CD4-positive, alpha-beta memory T cell (primary cell): ENCODE measurements at regions of chr2 and their contacts with region 1.

Region 1: DNA sequence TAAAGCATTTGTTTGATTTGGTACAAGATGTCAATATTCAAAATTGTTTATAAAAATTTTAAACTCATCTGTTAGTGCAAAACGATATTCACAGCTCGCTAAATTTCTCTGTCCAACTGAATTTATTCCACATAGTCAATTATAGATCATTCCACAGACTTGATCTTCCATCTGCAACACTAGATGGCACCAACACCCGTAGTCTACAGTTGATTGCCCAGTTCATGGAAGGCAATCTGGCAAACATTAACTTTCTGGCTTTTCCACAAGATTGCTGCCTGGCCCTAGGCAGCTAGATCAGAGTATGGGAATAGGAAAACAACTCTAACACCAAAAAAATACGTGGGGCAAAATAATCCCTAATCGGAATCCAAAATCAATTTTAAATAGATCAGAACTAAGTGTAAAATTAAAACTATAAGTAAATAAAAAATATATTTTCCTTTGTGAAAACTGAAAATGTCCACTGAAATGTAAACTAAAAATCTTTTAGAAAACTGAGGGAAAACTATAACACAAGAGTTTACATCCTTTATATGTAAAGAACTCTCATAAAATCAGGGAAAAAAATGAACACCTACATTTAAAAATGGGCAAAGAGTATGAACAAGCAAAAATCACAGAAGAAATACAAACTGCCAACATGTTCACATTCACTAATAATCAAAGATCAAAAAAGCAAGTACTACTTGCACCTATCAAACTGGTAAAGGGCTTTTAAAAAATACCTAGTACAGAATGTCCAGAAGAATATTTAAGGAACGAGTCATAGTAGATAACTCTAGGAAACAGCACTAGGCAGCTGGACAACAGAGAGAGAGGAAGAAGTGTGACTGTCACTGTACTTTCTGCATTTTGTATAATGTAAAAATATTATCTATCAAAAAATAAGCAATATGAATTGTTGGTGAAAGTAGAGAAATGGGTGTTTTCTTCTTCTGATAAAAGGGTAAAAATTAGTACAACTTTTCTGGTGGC is 35.0 kb downstream of the RTN4 start:
- DNase-seq: peak; percentile 37 to 51 (median 44)
- H3K4me3 ChIP-seq: no peak overlapping the region
- H3K4me3 Mint-ChIP-seq: no peak overlapping the region
- H3K27ac ChIP-seq: no peak overlapping the region
- H3K27ac Mint-ChIP-seq: peak overlapping the region in 4 of 7 donors; percentile 45 to 81 (median 70)
- H3K4me1 ChIP-seq: peaks cover 34% of the 10 kb centered on the region
- H3K4me1 Mint-ChIP-seq: peaks cover 27 to 64% (median 48%) of the 10 kb centered on the region in 4 donors
- H3K27me3 ChIP-seq: no peaks in the 10 kb centered on the region
- H3K27me3 Mint-ChIP-seq: no peaks in the 10 kb centered on the region

Region 2: GRCh38 chr2:54899576-54900200 is 115.6 kb before region 1 on chr2:
- CTCF ChIA-PET with region 1: interaction called, 26 read pairs
- POLR2A ChIA-PET with region 1: interaction called, 8 read pairs
- intact Hi-C with region 1: loop called (anchors 5 kb)
- DNase-seq: peak in 4 of 5 donors; percentile 11 to 25 (median 16)
- H3K4me3 ChIP-seq: no peak overlapping the region
- H3K4me3 Mint-ChIP-seq: no peak overlapping the region
- H3K27ac ChIP-seq: no peak overlapping the region
- H3K27ac Mint-ChIP-seq: no peak overlapping the region
- H3K4me1 ChIP-seq: peaks cover 27% of the 10 kb centered on the region
- H3K4me1 Mint-ChIP-seq: peaks cover 20 to 26% (median 23%) of the 10 kb centered on the region in 4 donors
- H3K27me3 ChIP-seq: no peaks in the 10 kb centered on the region
- H3K27me3 Mint-ChIP-seq: no peaks in the 10 kb centered on the region

Region 3: GRCh38 chr2:55026202-55026601 is 11.0 kb after region 1 on chr2:
- CTCF ChIA-PET with region 1: interaction called, 17 read pairs
- POLR2A ChIA-PET with region 1: no interaction called
- intact Hi-C with region 1: no loop called
- DNase-seq: no peak
- H3K4me3 ChIP-seq: no peak overlapping the region
- H3K4me3 Mint-ChIP-seq: peak overlapping the region in 1 of 8 donors; percentile 17
- H3K27ac ChIP-seq: no peak overlapping the region
- H3K27ac Mint-ChIP-seq: peak overlapping the region in 2 of 7 donors; percentile 2 to 30
- H3K4me1 ChIP-seq: peaks cover 78% of the 10 kb centered on the region
- H3K4me1 Mint-ChIP-seq: peaks cover 7 to 24% (median 18%) of the 10 kb centered on the region in 4 donors
- H3K27me3 ChIP-seq: no peaks in the 10 kb centered on the region
- H3K27me3 Mint-ChIP-seq: no peaks in the 10 kb centered on the region

Region 4: DNA sequence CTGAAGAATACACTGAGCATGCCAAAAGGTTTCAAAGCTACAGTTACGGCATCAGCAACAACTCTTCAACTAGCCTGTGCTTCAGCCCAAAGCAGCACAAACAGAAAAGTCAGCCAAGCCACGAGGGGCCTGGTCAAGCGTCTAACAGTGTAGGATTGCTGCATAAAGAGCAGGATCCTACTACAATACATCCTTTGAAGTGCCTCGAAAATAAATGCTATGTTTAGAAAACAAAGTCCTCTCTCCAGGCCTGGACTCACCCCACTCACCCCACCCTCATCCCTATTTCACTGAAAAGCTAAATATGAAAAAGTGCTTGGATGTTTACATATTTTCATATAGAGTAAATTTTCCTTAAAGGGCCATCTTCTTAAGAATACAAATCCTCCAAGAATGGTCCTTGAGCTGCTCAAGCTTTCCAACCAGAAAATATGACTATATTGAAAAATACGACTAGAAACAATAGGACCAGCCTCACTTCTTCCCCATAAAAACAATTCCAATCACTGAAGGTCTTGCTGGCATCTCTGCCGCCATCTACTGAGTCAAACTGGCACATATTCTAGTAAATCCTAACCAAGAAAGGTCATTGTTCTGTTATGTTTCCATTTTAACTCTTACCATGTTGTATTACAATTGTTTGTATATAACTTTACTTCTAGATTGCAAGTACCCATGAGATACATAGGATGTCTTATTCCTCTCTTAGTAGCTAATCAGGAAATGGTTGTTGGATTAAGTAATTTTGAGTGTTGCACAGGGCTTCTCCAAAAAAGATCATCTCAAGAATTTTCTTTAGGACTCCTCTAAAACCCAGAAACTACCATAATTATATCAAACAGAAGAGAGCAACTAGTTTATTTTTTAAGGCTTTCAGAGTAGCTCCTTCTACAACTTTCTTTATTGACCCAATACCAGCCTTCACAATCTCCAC is 153.2 kb after region 1 on chr2:
- CTCF ChIA-PET with region 1: interaction called, 177 read pairs
- POLR2A ChIA-PET with region 1: interaction called, 4 read pairs
- intact Hi-C with region 1: loop called (anchors 1 kb)
- DNase-seq: peak; percentile 37 to 50 (median 41)
- H3K4me3 ChIP-seq: no peak overlapping the region
- H3K4me3 Mint-ChIP-seq: no peak overlapping the region
- H3K27ac ChIP-seq: no peak overlapping the region
- H3K27ac Mint-ChIP-seq: peak overlapping the region in 1 of 7 donors; percentile 0
- H3K4me1 ChIP-seq: no peaks in the 10 kb centered on the region
- H3K4me1 Mint-ChIP-seq: peaks cover 0 to 3% (median 1%) of the 10 kb centered on the region in 4 donors
- H3K27me3 ChIP-seq: no peaks in the 10 kb centered on the region
- H3K27me3 Mint-ChIP-seq: no peaks in the 10 kb centered on the region

Region 5: GRCh38 chr2:55175254-55176025 is 160.2 kb after region 1 on chr2:
- CTCF ChIA-PET with region 1: interaction called, 177 read pairs
- POLR2A ChIA-PET with region 1: interaction called, 3 read pairs
- intact Hi-C with region 1: loop called (anchors 1 kb)
- DNase-seq: peak in 4 of 5 donors; percentile 46 to 64 (median 52)
- H3K4me3 ChIP-seq: no peak overlapping the region
- H3K4me3 Mint-ChIP-seq: peak overlapping the region in 2 of 8 donors; percentile 1 to 27
- H3K27ac ChIP-seq: no peak overlapping the region
- H3K27ac Mint-ChIP-seq: peak overlapping the region in 1 of 7 donors; percentile 44
- H3K4me1 ChIP-seq: no peaks in the 10 kb centered on the region
- H3K4me1 Mint-ChIP-seq: peaks cover 0 to 6% (median 3%) of the 10 kb centered on the region in 4 donors
- H3K27me3 ChIP-seq: no peaks in the 10 kb centered on the region
- H3K27me3 Mint-ChIP-seq: no peaks in the 10 kb centered on the region

Region 6: GRCh38 chr2:55223958-55224760 is 208.9 kb after region 1 on chr2:
- CTCF ChIA-PET with region 1: interaction called, 3 read pairs
- POLR2A ChIA-PET with region 1: interaction called, 7 read pairs
- intact Hi-C with region 1: loop called (anchors 5 kb)
- DNase-seq: peak in 2 of 5 donors; percentile 21 to 39
- H3K4me3 ChIP-seq: no peak overlapping the region
- H3K4me3 Mint-ChIP-seq: peak overlapping the region; percentile 79 to 90 (median 86)
- H3K27ac ChIP-seq: peak overlapping the region; percentile 84
- H3K27ac Mint-ChIP-seq: peak overlapping the region; percentile 85 to 95 (median 93)
- H3K4me1 ChIP-seq: peaks cover 40% of the 10 kb centered on the region
- H3K4me1 Mint-ChIP-seq: peaks cover 32 to 55% (median 41%) of the 10 kb centered on the region in 4 donors
- H3K27me3 ChIP-seq: no peaks in the 10 kb centered on the region
- H3K27me3 Mint-ChIP-seq: no peaks in the 10 kb centered on the region

Region 7: DNA sequence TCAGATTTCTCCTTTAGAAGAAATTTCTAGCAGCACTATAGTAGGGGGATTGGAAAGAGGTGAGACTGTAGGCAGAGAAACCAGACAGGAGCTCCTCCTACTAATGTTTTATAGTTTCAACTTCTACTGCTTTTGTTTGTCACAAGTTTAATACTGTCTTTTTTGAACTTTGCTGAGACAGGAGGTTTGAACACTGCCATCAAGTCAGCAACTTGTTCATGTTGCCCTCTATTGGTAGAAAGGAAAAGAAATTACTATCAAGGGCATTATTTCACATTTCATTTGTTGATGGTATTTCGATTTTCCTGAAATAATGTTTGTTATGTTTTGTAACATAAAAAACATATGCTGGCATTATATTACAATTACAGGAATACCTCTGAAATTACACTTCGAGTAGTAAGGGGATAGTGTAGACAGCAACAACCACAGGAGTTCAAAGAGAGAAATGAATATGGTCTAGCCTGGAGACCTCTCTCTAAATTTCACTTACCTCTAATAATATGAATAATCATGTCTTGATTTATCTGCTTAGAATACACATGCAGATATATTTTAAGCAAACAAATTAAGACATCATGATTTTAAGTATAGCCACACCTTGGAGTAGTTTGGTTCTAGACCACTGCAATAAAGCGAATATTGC is 416.9 kb after region 1 on chr2:
- CTCF ChIA-PET with region 1: no interaction called
- POLR2A ChIA-PET with region 1: no interaction called
- intact Hi-C with region 1: loop called (anchors 2 kb)
- DNase-seq: peak in 4 of 5 donors; percentile 27 to 45 (median 35)
- H3K4me3 ChIP-seq: no peak overlapping the region
- H3K4me3 Mint-ChIP-seq: no peak overlapping the region
- H3K27ac ChIP-seq: no peak overlapping the region
- H3K27ac Mint-ChIP-seq: peak overlapping the region in 1 of 7 donors; percentile 48
- H3K4me1 ChIP-seq: no peaks in the 10 kb centered on the region
- H3K4me1 Mint-ChIP-seq: peaks cover 0 to 5% (median 2%) of the 10 kb centered on the region in 4 donors
- H3K27me3 ChIP-seq: no peaks in the 10 kb centered on the region
- H3K27me3 Mint-ChIP-seq: peaks cover 0 to 3% of the 10 kb centered on the region in 2 donors